SK-N-SH (cell line): ENCODE measurements at regions of chr9 and their contacts with region 1.

Region 1: DNA sequence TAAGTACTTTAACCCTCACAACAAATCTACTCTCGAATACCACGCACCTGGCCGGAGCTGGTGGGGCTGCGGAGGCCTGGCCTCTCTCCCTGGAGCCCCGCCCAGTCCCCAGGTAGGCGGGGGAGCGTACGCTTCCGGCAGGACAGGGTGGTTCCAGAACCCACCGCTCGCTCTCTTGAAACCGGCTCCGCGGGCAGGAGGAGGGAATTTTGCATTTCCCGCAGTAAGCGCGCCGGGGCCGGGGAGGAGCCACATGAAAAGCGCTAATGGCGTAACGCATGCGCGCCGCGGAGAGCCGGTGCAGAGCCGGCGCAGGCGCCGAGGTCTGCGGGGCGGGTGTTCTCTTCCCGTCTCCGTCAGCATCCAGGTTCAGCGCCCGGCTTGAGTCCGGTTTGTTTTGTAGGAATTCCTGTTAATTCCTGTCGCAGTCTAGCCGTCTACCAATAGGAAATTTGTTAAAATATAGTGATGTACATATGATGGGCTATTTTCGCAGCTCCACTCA is 20.8 kb downstream of the CAVIN4 start:
- DNase-seq: peak; percentile 86
- H3K4me3 ChIP-seq: peak overlapping the region; percentile 63 to 66
- H3K27ac ChIP-seq: peak overlapping the region in 1 of 2 experiments; percentile 68; a peak in 2 of 4 replicates
- H3K4me1 ChIP-seq: peaks cover 0 to 9% of the 10 kb centered on the region in 2 experiments; a peak in 1 of 4 replicates
- H3K27me3 ChIP-seq: no peaks in the 10 kb centered on the region
- CTCF ChIP-seq: no peak
- EP300 ChIP-seq: no peak
- RAD21 ChIP-seq: no peak

Region 2: GRCh38 chr9:100437860-100438805 is 160.6 kb before region 1 on chr9:
- CTCF ChIA-PET with region 1: interaction called, 10 read pairs
- POLR2A ChIA-PET with region 1: no interaction called
- DNase-seq: peak; percentile 58
- H3K4me3 ChIP-seq: no peak overlapping the region; a peak in 1 of 4 replicates
- H3K27ac ChIP-seq: no peak overlapping the region; a peak in 1 of 4 replicates
- H3K4me1 ChIP-seq: peaks cover 0 to 3% of the 10 kb centered on the region in 2 experiments; a peak in 1 of 4 replicates
- H3K27me3 ChIP-seq: no peaks in the 10 kb centered on the region
- CTCF ChIP-seq: peak; percentile 95
- EP300 ChIP-seq: no peak
- RAD21 ChIP-seq: peak; percentile 73

Region 3: GRCh38 chr9:100587375-100587774 is 11.3 kb before region 1 on chr9:
- CTCF ChIA-PET with region 1: interaction called, 14 read pairs
- POLR2A ChIA-PET with region 1: no interaction called
- DNase-seq: no peak
- H3K4me3 ChIP-seq: no peak overlapping the region
- H3K27ac ChIP-seq: peak overlapping the region in 1 of 2 experiments; percentile 49; a peak in 2 of 4 replicates
- H3K4me1 ChIP-seq: peaks cover 0 to 30% of the 10 kb centered on the region in 2 experiments; a peak in 1 of 4 replicates
- H3K27me3 ChIP-seq: no peaks in the 10 kb centered on the region
- CTCF ChIP-seq: no peak
- EP300 ChIP-seq: peak in 1 of 2 experiments; percentile 24; a peak in 1 of 4 replicates
- RAD21 ChIP-seq: no peak

Region 4: GRCh38 chr9:100619665-100620064 is 21.0 kb after region 1 on chr9:
- CTCF ChIA-PET with region 1: interaction called, 36 read pairs
- POLR2A ChIA-PET with region 1: interaction called, 3 read pairs
- DNase-seq: no peak
- H3K4me3 ChIP-seq: no peak overlapping the region
- H3K27ac ChIP-seq: no peak overlapping the region
- H3K4me1 ChIP-seq: no peaks in the 10 kb centered on the region
- H3K27me3 ChIP-seq: no peaks in the 10 kb centered on the region
- CTCF ChIP-seq: no peak
- EP300 ChIP-seq: no peak
- RAD21 ChIP-seq: no peak

Region 5: DNA sequence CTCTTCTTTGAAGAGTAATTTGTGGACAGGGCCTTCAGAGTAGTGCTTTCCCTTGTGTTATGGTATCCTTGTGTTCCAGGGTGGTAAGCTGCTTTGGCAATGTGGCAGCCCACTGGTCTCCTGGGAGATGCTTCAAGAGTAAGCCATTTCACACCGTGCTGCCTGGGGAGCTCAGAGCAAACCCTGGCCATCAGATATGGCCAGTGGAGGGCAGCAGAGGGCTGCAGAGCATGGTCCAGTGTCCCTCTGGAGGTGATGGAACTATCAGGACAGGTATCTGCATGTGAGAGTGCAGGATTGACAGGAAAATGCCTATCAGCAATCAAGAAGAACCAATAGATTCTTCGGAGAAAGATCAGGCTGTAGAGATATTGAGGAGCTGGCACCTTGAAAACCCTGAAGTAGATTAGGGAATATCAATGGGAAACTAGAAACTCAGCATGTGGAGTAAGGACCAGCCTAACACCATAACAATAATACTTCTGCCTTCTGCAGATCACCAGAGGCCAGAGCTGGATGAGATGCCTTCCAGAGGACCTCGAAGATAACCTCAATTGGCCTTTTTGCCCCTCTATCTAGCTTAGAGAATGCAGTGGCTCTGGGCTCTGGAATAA is 520.6 kb after region 1 on chr9:
- CTCF ChIA-PET with region 1: interaction called, 10 read pairs
- POLR2A ChIA-PET with region 1: no interaction called
- DNase-seq: peak; percentile 44
- H3K4me3 ChIP-seq: no peak overlapping the region; a peak in 1 of 4 replicates
- H3K27ac ChIP-seq: no peak overlapping the region
- H3K4me1 ChIP-seq: no peaks in the 10 kb centered on the region
- H3K27me3 ChIP-seq: no peaks in the 10 kb centered on the region
- CTCF ChIP-seq: peak; percentile 76
- EP300 ChIP-seq: no peak
- RAD21 ChIP-seq: peak; percentile 71

Region 6: DNA sequence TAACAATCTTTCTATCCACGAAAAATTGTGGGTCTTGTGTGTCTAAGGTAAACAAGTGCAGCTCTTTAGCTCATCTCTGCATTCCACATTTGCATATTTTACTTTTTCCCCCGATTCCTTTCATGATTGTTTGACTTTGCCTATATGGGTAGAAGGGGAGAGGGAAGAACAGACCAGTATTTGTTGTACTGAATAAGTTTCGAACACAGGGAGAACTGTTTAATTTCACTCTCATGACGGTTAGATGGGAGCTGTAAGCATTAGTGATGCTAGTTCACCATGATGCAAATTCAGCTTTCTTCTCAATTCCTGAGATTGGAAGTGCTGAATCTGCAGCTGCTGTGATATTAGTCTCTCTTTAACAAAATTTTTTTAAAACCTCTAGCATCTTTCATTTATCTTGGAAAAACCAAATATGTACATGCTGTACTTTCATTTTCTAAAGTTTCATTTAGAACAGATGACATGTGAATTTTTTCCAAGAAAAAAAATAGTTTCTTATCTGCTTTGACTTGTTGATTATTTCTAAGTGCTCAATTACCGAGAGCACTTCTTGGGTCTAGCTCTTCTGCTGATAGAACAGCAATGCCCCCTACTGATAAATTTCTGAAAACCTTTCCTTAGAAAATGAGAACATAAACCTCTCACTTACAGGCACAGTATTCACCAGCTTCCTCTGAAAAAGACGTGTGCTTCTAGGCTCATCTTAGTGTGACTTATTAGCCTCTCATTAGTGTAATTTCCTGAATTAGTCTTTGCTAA is 636.6 kb after region 1 on chr9:
- CTCF ChIA-PET with region 1: interaction called, 14 read pairs
- POLR2A ChIA-PET with region 1: no interaction called
- DNase-seq: peak; percentile 2
- H3K4me3 ChIP-seq: peak overlapping the region in 1 of 2 experiments; percentile 51; a peak in 1 of 4 replicates
- H3K27ac ChIP-seq: no peak overlapping the region
- H3K4me1 ChIP-seq: no peaks in the 10 kb centered on the region
- H3K27me3 ChIP-seq: no peaks in the 10 kb centered on the region
- CTCF ChIP-seq: peak; percentile 64
- EP300 ChIP-seq: no peak
- RAD21 ChIP-seq: peak; percentile 69